Mucosa of descending colon (tissue), 3 donors: ENCODE measurements at regions of chr9 and their contacts with region 1.

Region 1: DNA sequence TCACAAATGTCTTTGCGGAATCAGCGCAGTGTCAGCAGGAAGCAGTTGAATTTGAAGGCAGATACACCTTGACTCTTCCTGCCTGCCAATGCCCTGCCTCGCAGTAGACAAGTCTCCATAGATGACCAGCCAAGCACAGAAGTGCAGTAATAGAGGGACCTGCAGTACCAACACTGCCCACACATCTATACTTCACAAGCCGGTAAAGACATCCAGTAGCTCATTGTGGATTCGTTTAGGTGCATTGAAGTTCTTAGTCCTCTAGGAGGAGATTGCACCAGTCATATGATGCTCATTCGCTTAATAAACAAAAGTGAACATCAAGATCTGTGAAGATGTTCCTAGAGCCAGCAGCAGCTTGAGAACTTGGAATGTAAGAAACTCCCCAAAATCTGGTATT is 7.1 kb upstream of the IFNA2 start:
- DNase-seq: no peak
- ATAC-seq: peak; percentile 80
- H3K4me3 ChIP-seq: no peak overlapping the region
- H3K4me1 ChIP-seq: no peaks in the 10 kb centered on the region
- CTCF ChIP-seq: no peak

Region 2: DNA sequence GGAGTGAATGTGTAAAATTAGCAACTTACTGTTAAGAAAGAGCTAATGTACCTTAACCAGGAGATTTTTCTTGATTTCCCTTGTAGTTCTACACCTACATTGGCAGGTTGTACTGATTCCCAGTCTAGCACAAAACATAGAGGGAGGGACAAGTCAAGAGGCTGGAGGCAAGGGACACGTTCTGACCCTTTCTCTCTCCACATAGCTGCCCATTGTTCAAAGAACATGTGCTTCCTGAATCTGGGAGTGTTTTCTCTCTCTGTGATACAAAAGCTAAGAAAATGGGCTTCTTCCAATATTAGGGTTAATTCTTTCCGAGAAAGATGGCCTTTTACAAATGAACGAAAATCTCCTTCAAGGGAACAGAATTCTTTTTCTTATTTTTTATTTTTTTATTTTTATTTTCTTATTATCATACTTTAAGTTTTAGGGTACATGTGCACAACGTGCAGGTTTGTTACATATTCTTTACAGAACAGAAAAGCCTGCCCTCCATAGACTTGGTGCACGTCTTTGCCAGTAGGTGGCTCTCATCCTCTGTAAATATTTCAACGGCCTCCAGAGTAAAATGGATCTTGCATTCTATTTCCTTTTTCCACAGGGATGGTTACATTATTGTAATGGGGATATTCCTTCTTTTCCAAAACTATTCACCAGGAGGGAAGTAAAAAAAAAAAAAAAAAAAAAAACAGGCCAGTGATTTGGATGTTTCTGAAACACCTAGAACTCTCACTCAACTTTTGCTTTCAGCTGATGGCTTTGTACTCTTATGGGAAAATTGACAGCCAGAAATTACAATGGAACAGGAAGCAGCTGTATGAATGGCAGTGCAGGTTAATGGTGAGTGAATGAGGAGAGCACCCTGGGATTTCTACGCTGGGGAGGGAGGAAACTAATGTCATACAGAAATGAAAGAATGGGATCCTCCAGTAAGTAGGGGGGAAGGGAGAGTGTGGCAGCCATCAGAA is 74.0 kb before region 1 on chr9:
- intact Hi-C with region 1: loop called in 1 of 2 experiments (anchors 5 kb)
- DNase-seq: peak in 1 of 3 donors; percentile 71
- ATAC-seq: peak; percentile 81
- H3K4me3 ChIP-seq: no peak overlapping the region
- H3K4me1 ChIP-seq: no peaks in the 10 kb centered on the region
- CTCF ChIP-seq: peak; percentile 23